CD4-positive, alpha-beta memory T cell (primary cell): ENCODE measurements at regions of chr1 and their contacts with region 1.

Region 1: DNA sequence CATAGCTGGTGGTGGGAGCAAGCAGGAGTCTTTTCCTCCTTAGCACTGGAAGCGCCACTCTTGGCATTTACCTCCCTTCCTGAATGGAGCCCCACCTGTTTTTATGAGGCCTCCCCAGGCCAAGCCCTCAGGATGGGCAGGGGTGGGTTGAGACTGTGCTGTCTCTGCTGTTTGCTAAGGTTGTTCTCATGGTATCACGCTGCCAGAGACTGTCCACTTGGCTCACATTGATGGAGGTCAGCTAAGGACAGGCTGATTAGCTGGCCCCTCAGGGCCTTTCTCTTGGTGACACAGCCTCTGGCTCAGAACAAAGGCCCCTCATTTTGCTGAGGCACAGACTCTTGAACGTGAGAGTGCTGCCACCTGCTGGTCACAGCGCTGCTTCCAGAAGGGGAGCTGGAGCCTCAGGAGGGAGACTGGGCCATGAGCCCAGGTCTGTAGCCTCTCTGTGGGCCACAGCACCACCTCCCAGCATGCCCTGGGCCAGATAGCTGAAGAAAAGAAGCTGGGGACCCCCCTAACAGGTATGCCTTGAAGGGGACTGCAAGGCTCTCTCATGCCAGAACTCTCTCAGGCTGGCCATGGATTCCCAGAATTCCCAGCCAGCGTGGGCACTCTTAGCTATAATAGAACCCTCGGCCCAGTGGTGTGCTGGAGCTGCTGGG is 85.6 kb downstream of the CD58 start:
- DNase-seq: peak; percentile 74 to 81 (median 76)
- H3K4me3 ChIP-seq: no peak overlapping the region
- H3K4me3 Mint-ChIP-seq: no peak overlapping the region
- H3K27ac ChIP-seq: no peak overlapping the region
- H3K27ac Mint-ChIP-seq: no peak overlapping the region
- H3K4me1 ChIP-seq: no peaks in the 10 kb centered on the region
- H3K4me1 Mint-ChIP-seq: peaks cover 0 to 2% (median 0%) of the 10 kb centered on the region in 4 donors
- H3K27me3 ChIP-seq: no peaks in the 10 kb centered on the region
- H3K27me3 Mint-ChIP-seq: no peaks in the 10 kb centered on the region

Region 2: GRCh38 chr1:116139592-116140134 is 345.5 kb before region 1 on chr1:
- CTCF ChIA-PET with region 1: interaction called, 463 read pairs
- POLR2A ChIA-PET with region 1: interaction called, 28 read pairs
- intact Hi-C with region 1: loop called (anchors 1 kb)
- DNase-seq: no peak
- H3K4me3 ChIP-seq: no peak overlapping the region
- H3K4me3 Mint-ChIP-seq: no peak overlapping the region
- H3K27ac ChIP-seq: no peak overlapping the region
- H3K27ac Mint-ChIP-seq: no peak overlapping the region
- H3K4me1 ChIP-seq: no peaks in the 10 kb centered on the region
- H3K4me1 Mint-ChIP-seq: peaks cover 5 to 8% (median 6%) of the 10 kb centered on the region in 4 donors
- H3K27me3 ChIP-seq: no peaks in the 10 kb centered on the region
- H3K27me3 Mint-ChIP-seq: peaks cover 4 to 7% of the 10 kb centered on the region in 2 donors

Region 3: DNA sequence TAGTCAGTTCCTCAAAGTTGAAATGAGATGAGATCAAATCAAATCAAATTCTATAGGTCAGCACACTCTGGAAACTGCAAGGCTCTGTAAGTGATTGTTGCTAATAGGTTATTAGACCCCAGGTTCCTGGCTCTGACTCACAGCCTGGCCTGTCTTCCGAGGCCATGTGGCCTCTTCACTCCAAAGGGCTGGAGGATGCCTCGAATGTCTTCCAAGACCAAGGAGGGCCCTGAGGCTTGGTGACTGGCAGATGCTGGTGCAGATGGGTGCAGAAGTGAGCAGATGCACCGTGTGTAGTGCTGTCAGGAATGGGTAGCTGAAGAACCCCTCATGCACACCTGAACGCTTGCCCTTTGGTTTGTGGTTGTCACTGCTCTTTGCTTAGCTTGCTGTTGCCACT is 260.6 kb before region 1 on chr1:
- CTCF ChIA-PET with region 1: interaction called, 153 read pairs
- POLR2A ChIA-PET with region 1: no interaction called
- intact Hi-C with region 1: no loop called
- DNase-seq: no peak
- H3K4me3 ChIP-seq: no peak overlapping the region
- H3K4me3 Mint-ChIP-seq: no peak overlapping the region
- H3K27ac ChIP-seq: no peak overlapping the region
- H3K27ac Mint-ChIP-seq: no peak overlapping the region
- H3K4me1 ChIP-seq: no peaks in the 10 kb centered on the region
- H3K4me1 Mint-ChIP-seq: peaks cover 0 to 2% (median 0%) of the 10 kb centered on the region in 4 donors
- H3K27me3 ChIP-seq: no peaks in the 10 kb centered on the region
- H3K27me3 Mint-ChIP-seq: no peaks in the 10 kb centered on the region

Region 4: GRCh38 chr1:116377541-116378529 is 107.4 kb before region 1 on chr1:
- CTCF ChIA-PET with region 1: interaction called, 18 read pairs
- POLR2A ChIA-PET with region 1: interaction called, 4 read pairs
- intact Hi-C with region 1: no loop called
- DNase-seq: peak; percentile 60 to 72 (median 68)
- H3K4me3 ChIP-seq: peak overlapping the region in 1 of 2 donors; percentile 32
- H3K4me3 Mint-ChIP-seq: peak overlapping the region; percentile 81 to 99 (median 88)
- H3K27ac ChIP-seq: peak overlapping the region; percentile 71
- H3K27ac Mint-ChIP-seq: peak overlapping the region; percentile 90 to 96 (median 94)
- H3K4me1 ChIP-seq: peaks cover 84% of the 10 kb centered on the region
- H3K4me1 Mint-ChIP-seq: peaks cover 64 to 86% (median 77%) of the 10 kb centered on the region in 4 donors
- H3K27me3 ChIP-seq: no peaks in the 10 kb centered on the region
- H3K27me3 Mint-ChIP-seq: peaks cover 0 to 1% of the 10 kb centered on the region in 2 donors

Region 5: DNA sequence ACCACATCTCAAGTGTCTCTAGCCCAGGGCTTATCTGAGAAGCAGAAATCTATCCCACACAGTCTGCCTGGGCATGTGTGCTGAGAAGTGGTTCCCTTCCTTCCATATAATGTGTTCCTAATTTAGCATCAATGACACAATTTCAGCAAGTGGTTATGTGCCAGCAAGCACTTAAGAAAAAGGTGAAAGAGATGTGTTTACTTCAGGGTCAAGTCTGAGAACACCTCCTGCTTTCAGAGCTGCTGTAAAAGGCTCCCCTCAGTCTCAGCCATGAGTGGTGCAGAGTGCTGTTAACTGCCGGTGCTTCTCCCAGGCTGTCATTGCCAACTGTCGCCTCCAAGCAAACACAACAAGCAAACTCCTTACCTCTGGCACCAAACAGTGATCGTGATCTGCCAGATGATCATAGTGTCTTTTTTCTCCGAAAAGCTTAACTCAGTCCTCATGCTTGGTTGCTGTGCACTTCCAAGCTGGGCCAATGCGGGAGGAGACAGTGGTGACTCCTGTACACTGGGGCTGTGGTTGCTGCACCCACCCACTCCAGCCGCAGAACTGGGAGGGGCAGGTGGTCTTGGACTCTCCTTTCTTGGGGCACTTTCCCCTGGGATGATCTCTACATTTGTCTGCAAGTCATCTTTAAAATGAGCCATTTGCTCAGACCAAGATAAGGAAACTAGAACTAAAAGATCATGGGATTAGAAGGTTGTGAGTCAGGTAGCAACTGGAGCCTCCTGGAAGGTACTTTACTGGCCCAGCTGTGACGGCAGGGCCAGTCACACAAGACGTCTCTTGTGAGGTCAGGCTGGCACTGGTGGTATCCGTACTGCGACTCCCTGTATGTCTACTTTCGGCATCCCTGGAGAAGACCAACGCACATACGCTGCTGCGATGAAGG is 79.7 kb before region 1 on chr1:
- CTCF ChIA-PET with region 1: interaction called, 12 read pairs
- POLR2A ChIA-PET with region 1: no interaction called
- intact Hi-C with region 1: no loop called
- DNase-seq: no peak
- H3K4me3 ChIP-seq: no peak overlapping the region
- H3K4me3 Mint-ChIP-seq: no peak overlapping the region
- H3K27ac ChIP-seq: no peak overlapping the region
- H3K27ac Mint-ChIP-seq: peak overlapping the region in 6 of 7 donors; percentile 22 to 69 (median 51)
- H3K4me1 ChIP-seq: peaks cover 11% of the 10 kb centered on the region
- H3K4me1 Mint-ChIP-seq: peaks cover 10 to 28% (median 21%) of the 10 kb centered on the region in 4 donors
- H3K27me3 ChIP-seq: no peaks in the 10 kb centered on the region
- H3K27me3 Mint-ChIP-seq: no peaks in the 10 kb centered on the region

Region 6: GRCh38 chr1:116472431-116472961 is 12.7 kb before region 1 on chr1:
- CTCF ChIA-PET with region 1: interaction called, 18 read pairs
- POLR2A ChIA-PET with region 1: no interaction called
- intact Hi-C with region 1: no loop called
- DNase-seq: no peak
- H3K4me3 ChIP-seq: no peak overlapping the region
- H3K4me3 Mint-ChIP-seq: no peak overlapping the region
- H3K27ac ChIP-seq: no peak overlapping the region
- H3K27ac Mint-ChIP-seq: no peak overlapping the region
- H3K4me1 ChIP-seq: no peaks in the 10 kb centered on the region
- H3K4me1 Mint-ChIP-seq: no peaks in the 10 kb centered on the region
- H3K27me3 ChIP-seq: no peaks in the 10 kb centered on the region
- H3K27me3 Mint-ChIP-seq: no peaks in the 10 kb centered on the region

Region 7: DNA sequence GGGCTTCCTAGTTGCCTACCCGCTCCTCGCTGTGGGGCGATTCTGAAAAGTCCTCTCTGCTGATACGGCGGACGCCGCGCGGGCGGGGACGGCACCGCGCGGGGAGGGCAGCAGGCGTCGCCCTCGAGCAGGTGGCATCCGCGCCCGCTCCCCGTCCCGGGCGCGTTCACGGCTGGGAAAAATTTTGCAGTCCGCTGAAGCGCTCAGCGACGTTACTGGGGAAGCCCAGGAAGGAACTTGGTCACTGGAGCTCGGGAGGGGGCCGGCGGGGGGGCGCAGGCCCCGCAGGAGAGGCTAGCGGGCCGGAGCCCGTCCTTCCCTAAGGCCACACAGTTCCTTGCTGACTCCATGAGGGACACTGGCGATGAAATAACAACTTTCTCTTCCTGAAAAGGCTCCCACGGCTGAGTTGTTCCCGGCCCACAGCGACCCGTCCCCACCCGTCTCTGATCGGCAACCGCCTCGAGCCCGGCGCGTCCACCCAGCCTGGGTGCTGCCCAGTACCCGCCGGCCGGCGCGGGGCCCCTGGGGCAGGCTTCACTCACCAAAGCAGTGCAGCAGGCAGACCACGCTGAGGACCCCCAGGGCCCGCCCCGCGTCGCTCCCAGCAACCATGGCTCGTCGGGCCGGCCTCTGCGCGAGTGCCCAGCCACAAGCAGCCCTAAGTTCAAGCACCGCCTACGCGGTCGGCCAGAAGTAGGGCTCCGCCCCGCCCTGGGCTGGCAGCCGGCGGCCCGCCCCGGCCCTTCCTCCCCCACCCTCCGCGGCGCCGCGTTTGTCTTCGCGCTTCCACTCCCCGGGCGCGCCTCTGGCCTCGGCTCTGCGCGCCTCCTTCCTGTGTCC is 85.4 kb after region 1 on chr1 and contains the start of gene CD58:
- CTCF ChIA-PET with region 1: interaction called, 12 read pairs
- POLR2A ChIA-PET with region 1: interaction called, 3 read pairs
- intact Hi-C with region 1: no loop called
- DNase-seq: peak; percentile 74 to 81 (median 75)
- H3K4me3 ChIP-seq: peak within 1 kb of the TSS; percentile 80 to 93
- H3K4me3 Mint-ChIP-seq: peak within 1 kb of the TSS; percentile 89 to 99 (median 94)
- H3K27ac ChIP-seq: peak within 1 kb of the TSS; percentile 93
- H3K27ac Mint-ChIP-seq: peak within 1 kb of the TSS; percentile 90 to 98 (median 97)
- H3K4me1 ChIP-seq: peaks cover 62% of the 10 kb centered on the region
- H3K4me1 Mint-ChIP-seq: peaks cover 35 to 64% (median 49%) of the 10 kb centered on the region in 4 donors
- H3K27me3 ChIP-seq: no peaks in the 10 kb centered on the region
- H3K27me3 Mint-ChIP-seq: peaks cover 0 to 2% of the 10 kb centered on the region in 2 donors
- total RNA-seq, gene CD58: 25.2 to 30.9 TPM